Breast epithelium (tissue), 4 donors: ENCODE measurements at regions of chr17 and their contacts with region 1.

Region 1: DNA sequence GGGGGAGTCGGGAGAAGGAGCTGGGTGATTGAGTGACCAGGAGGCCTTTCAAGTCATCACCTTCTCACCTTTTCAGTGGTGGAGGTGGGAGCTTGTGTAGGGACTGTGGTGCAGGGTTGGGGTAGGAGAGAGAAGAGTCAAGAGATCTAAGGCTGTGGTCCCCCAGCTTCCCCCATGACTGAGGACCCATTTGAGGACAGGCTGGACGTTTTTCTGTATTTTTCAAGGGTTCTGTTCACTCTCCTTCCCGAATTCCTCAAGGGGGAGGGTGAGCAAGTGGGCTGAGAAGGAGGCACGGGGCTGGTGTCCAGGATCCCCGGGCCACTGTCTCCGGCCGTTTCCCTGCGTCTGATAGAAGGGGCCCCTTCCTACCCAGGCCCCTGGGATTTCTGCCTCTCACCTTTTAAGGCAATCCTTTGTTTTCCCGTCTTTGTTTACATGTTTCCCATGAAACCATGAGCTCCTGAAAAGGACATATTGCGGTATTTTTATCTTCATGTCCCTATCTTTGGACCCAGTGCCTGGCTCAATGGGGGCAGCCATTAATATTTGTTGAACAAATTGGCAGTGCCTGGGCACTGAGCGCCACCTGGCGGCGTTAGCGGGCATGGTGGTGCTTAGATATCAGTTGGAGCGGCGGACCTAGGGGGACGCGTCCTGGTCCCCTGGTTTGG is 9.2 kb upstream of the CD300A start:
- DNase-seq: peak; percentile 63 to 77
- H3K4me3 ChIP-seq: no peak overlapping the region
- H3K27ac ChIP-seq: no peak overlapping the region
- H3K4me1 ChIP-seq: peaks cover 5 to 11% of the 10 kb centered on the region in 2 donors
- H3K27me3 ChIP-seq: no peaks in the 10 kb centered on the region
- CTCF ChIP-seq: peak; percentile 87 to 98 (median 98)
- POLR2A ChIP-seq: no peak

Region 2: DNA sequence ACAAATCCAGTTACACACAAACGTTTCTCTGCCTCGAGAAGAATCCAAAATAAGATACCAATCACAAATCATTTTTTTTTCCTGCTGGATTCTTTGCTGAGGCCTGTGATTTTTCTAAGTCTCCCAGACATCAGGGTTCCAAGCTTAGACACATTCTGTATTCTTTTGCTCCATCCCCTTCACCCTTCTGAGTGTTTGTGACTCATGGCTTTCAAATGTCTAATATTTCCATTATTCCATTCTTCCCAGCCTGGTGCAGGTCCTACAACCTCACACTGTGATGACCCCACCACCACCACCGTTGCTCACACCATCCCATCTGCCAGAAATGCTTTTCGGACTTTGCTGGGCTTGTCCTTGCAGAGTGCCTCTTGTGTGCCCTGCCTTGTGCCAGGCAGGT is 1856.3 kb before region 1 on chr17:
- intact Hi-C with region 1: no loop called
- DNase-seq: no peak
- H3K4me3 ChIP-seq: no peak overlapping the region
- H3K27ac ChIP-seq: no peak overlapping the region
- H3K4me1 ChIP-seq: no peaks in the 10 kb centered on the region
- H3K27me3 ChIP-seq: peaks cover 0 to 15% of the 10 kb centered on the region in 2 donors
- CTCF ChIP-seq: no peak
- POLR2A ChIP-seq: no peak

Region 3: DNA sequence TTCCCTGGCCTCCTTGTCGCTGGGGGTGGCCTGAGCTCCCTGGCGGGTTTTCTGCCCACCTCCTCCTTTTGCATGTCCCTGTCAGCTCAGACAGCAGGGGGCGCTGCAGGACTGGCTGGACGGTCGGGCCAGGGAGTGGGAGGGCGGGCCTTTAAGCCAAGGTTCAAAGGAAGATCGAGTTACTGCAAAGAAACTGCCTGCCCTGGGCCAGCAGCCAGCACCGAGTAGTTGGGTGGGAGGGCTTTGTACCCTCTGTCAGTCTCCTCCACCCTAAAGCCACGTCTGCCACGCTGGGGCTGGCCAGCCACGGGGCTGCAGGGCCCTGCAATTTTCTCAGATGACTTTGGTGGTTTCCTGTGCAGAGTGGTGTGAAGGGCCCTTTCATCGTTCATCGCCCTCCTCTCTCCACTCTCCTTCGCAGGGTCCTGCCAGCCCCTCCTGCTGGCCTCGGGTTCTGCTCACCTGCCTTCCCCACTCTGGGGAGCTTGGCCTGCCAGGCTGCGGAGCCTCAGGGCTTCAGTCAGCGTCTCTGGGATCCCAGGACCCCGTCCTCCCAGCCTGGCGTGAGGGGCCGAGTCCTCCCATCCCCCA is 77.7 kb before region 1 on chr17:
- intact Hi-C with region 1: loop called (anchors 5 kb)
- DNase-seq: peak; percentile 86 to 94
- H3K4me3 ChIP-seq: peak overlapping the region in 2 of 3 donors; percentile 13 to 49
- H3K27ac ChIP-seq: peak overlapping the region; percentile 21 to 56
- H3K4me1 ChIP-seq: peaks cover 5 to 8% of the 10 kb centered on the region in 2 donors
- H3K27me3 ChIP-seq: no peaks in the 10 kb centered on the region
- CTCF ChIP-seq: peak; percentile 77 to 98 (median 98)
- POLR2A ChIP-seq: no peak